Activated naive CD4-positive, alpha-beta T cell treated with anti-CD3 and anti-CD28 coated beads for 36 hours (primary cell): ENCODE measurements at regions of chr17 and their contacts with region 1.

Region 1: GRCh38 chr17:72725433-72726068 is 366.9 kb downstream of the SLC39A11 start:
- DNase-seq: peak; percentile 68
- H3K4me3 Mint-ChIP-seq: no peak overlapping the region
- H3K27ac Mint-ChIP-seq: no peak overlapping the region
- H3K4me1 Mint-ChIP-seq: peaks cover 28% of the 10 kb centered on the region
- H3K27me3 Mint-ChIP-seq: no peaks in the 10 kb centered on the region

Region 2: DNA sequence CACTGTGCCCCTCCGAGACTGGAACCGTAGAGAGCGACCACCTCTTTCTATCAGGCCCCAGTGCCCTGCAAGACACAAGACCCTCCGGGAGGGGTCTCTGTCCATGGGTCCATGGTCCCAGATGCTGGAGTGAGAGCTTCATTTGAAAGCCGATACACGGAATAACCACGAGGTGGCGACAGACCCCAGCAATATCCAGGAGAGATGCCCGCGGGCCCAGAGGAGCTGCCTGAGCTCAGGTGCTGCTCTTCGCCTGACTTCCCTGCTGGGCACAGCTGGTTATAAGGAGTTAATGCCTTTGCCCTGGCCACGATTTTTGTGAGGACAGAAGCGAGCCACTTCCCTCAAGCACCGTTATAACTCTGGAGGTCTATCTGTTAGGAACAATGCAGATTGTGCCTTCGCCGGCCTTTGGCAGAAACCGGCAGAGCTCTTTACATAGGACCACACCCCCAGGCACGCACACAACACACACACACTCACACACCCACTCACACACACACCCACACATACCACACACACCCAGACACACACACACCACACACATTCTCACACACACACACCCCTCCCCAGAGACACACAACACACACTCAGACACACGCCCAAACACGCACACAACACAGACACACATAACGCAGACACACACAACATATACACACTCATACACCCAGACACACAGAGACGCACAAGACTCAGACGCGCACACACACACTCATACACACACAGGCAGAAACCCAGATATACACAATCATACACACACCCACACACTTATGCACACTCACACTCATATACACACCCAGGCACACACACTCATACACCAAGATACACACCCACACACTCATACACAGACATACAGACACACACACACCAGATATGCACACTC is 168.4 kb before region 1 on chr17:
- CTCF ChIA-PET with region 1: interaction called, 94 read pairs
- intact Hi-C with region 1: loop called (anchors 1 kb)
- DNase-seq: peak; percentile 80
- H3K4me3 Mint-ChIP-seq: no peak overlapping the region
- H3K27ac Mint-ChIP-seq: no peak overlapping the region
- H3K4me1 Mint-ChIP-seq: no peaks in the 10 kb centered on the region
- H3K27me3 Mint-ChIP-seq: peaks cover 3% of the 10 kb centered on the region

Region 3: GRCh38 chr17:73092523-73093135 is 367.1 kb after region 1 on chr17 and contains the start of gene SLC39A11:
- CTCF ChIA-PET with region 1: interaction called, 4 read pairs
- intact Hi-C with region 1: loop called (anchors 2 kb)
- DNase-seq: peak; percentile 92
- H3K4me3 Mint-ChIP-seq: peak within 1 kb of the TSS; percentile 99
- H3K27ac Mint-ChIP-seq: peak within 1 kb of the TSS; percentile 84
- H3K4me1 Mint-ChIP-seq: peaks cover 28% of the 10 kb centered on the region
- H3K27me3 Mint-ChIP-seq: no peaks in the 10 kb centered on the region
- total RNA-seq, gene SLC39A11: 14.0 to 16.4 TPM

Region 4: GRCh38 chr17:73166731-73167581 is 441.4 kb after region 1 on chr17:
- CTCF ChIA-PET with region 1: interaction called, 44 read pairs
- intact Hi-C with region 1: no loop called
- DNase-seq: peak; percentile 52
- H3K4me3 Mint-ChIP-seq: peak overlapping the region; percentile 42
- H3K27ac Mint-ChIP-seq: no peak overlapping the region
- H3K4me1 Mint-ChIP-seq: peaks cover 22% of the 10 kb centered on the region
- H3K27me3 Mint-ChIP-seq: peaks cover 59% of the 10 kb centered on the region

Region 5: DNA sequence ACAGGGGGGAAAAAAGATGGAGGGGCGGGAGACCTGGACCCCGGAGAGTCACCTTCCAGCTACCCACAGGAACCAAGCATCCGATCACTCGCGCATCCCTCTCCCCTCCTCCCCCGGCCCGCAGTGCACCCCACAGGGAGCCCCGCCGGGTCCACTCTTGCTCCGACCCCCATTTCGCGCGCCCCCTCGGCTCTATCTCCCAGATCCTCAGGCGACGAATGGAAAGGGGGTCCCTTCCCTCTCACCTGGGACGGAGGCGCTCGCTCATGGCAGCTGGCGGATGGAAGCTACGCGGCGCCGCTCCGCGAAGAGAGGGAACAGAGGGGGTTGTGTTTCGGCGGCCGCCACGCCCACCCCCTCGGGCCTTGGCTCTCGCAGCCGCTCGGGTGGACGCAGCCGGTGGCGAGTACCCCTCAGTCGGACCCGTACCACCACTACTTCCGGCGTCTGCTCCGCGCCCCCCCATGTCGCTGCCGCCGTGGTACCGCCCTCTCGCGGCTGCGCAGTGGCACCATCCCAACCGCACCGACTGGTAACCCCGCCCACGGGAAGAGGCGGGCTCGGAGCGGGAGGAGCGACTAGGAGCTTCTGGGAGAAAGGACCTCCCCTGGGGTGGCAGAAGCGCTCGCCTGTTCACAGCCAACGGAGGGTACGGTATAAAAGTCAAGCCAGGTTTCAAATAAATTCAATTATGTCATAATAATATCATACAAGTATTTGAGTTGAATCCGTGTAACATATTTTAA is 506.5 kb after region 1 on chr17:
- CTCF ChIA-PET with region 1: interaction called, 18 read pairs
- intact Hi-C with region 1: loop called (anchors 1 kb)
- DNase-seq: peak; percentile 97
- H3K4me3 Mint-ChIP-seq: peak overlapping the region; percentile 96
- H3K27ac Mint-ChIP-seq: peak overlapping the region; percentile 94
- H3K4me1 Mint-ChIP-seq: peaks cover 64% of the 10 kb centered on the region
- H3K27me3 Mint-ChIP-seq: no peaks in the 10 kb centered on the region

Region 6: GRCh38 chr17:73311781-73312641 is 586.5 kb after region 1 on chr17 and contains the start of gene CDC42EP4:
- CTCF ChIA-PET with region 1: no interaction called
- intact Hi-C with region 1: loop called (anchors 2 kb)
- DNase-seq: peak; percentile 91
- H3K4me3 Mint-ChIP-seq: peak within 1 kb of the TSS; percentile 80
- H3K27ac Mint-ChIP-seq: no peak within 1 kb of the TSS
- H3K4me1 Mint-ChIP-seq: peaks cover 10% of the 10 kb centered on the region
- H3K27me3 Mint-ChIP-seq: no peaks in the 10 kb centered on the region
- total RNA-seq, gene CDC42EP4: 1.7 to 2.1 TPM